Dendritic cell treated with granulocyte-macrophage colony-stimulating factor and Interleukin-4, amounts not matched to agents 40 ng/mL and 50 ng/mL, for 4 days (primary cell): ENCODE measurements at regions of chr3 and their contacts with region 1.

Region 1: GRCh38 chr3:45137656-45138181 is 8.5 kb downstream of the CDCP1 start:
- H3K4me3 Mint-ChIP-seq: no peak overlapping the region
- H3K27ac Mint-ChIP-seq: no peak overlapping the region
- H3K4me1 Mint-ChIP-seq: peaks cover 69% of the 10 kb centered on the region
- H3K27me3 Mint-ChIP-seq: no peaks in the 10 kb centered on the region

Region 2: GRCh38 chr3:45043728-45044299 is 93.9 kb before region 1 on chr3:
- intact Hi-C with region 1: loop called (anchors 5 kb)
- H3K4me3 Mint-ChIP-seq: no peak overlapping the region
- H3K27ac Mint-ChIP-seq: peak overlapping the region; percentile 66
- H3K4me1 Mint-ChIP-seq: peaks cover 44% of the 10 kb centered on the region
- H3K27me3 Mint-ChIP-seq: peaks cover 8% of the 10 kb centered on the region

Region 3: GRCh38 chr3:45167011-45167911 is 29.5 kb after region 1 on chr3:
- intact Hi-C with region 1: loop called (anchors 5 kb)
- H3K4me3 Mint-ChIP-seq: peak overlapping the region; percentile 57
- H3K27ac Mint-ChIP-seq: peak overlapping the region; percentile 94
- H3K4me1 Mint-ChIP-seq: peaks cover 88% of the 10 kb centered on the region
- H3K27me3 Mint-ChIP-seq: no peaks in the 10 kb centered on the region